ENCODE measurements at regions of chr2 and their contacts with region 1.

Region 1: DNA sequence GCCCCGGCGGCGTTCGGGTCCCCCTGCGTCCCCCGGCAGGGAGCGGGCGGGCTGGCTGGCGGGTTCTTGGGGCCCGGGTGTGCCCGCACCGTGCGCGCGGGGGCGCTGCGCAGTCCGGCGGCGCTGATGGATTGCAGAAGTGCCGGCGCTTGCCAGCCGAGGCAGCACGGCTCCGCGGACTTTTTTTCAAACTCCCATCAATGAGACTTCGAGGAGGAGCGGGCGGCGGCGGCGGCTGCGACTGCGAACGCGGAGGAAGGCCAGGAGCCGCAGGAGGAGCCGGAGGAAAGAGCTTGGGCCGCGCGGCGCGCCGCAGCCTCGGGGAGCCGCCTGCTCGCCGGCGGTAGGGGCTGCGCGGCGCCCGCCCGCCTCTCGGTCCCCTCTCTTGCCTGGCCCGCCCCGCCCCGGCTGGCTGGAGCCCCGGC is at the start of gene GLI2:
- DNase-seq: peak; percentile 50 to 90
- H3K4me3 ChIP-seq: peak within 1 kb of the TSS; percentile 80 to 91 (median 89)
- H3K27ac ChIP-seq: peak within 1 kb of the TSS; percentile 79; the same call in 1 of the 2 replicates
- H3K4me1 ChIP-seq: peaks cover 12 to 24% (median 16%) of the 10 kb centered on the region in 4 experiments
- H3K27me3 ChIP-seq: no peaks in the 10 kb centered on the region; a peak in 1 of 7 replicates
- CTCF ChIP-seq: peak; percentile 66 to 98 (median 83)
- EP300 ChIP-seq: no peak
- POLR2A ChIP-seq: no peak
- RAD21 ChIP-seq: peak; percentile 60 to 78
- total RNA-seq, gene GLI2: 46.9 and 49.8 TPM in 2 replicates

Region 2: GRCh38 chr2:120436885-120437603 is 298.7 kb before region 1 on chr2:
- CTCF ChIA-PET with region 1: no interaction called
- POLR2A ChIA-PET with region 1: no interaction called
- DNase-seq: peak; percentile 53 to 88
- H3K4me3 ChIP-seq: no peak overlapping the region
- H3K27ac ChIP-seq: no peak overlapping the region
- H3K4me1 ChIP-seq: peaks cover 0 to 30% (median 16%) of the 10 kb centered on the region in 4 experiments; a peak in 6 of 7 replicates
- H3K27me3 ChIP-seq: peaks cover 4 to 64% (median 51%) of the 10 kb centered on the region in 4 experiments
- CTCF ChIP-seq: peak in 2 of 3 experiments; percentile 94 to 95; a peak in 3 of 4 replicates
- EP300 ChIP-seq: no peak
- POLR2A ChIP-seq: no peak
- RAD21 ChIP-seq: peak; percentile 80 to 82

Region 3: DNA sequence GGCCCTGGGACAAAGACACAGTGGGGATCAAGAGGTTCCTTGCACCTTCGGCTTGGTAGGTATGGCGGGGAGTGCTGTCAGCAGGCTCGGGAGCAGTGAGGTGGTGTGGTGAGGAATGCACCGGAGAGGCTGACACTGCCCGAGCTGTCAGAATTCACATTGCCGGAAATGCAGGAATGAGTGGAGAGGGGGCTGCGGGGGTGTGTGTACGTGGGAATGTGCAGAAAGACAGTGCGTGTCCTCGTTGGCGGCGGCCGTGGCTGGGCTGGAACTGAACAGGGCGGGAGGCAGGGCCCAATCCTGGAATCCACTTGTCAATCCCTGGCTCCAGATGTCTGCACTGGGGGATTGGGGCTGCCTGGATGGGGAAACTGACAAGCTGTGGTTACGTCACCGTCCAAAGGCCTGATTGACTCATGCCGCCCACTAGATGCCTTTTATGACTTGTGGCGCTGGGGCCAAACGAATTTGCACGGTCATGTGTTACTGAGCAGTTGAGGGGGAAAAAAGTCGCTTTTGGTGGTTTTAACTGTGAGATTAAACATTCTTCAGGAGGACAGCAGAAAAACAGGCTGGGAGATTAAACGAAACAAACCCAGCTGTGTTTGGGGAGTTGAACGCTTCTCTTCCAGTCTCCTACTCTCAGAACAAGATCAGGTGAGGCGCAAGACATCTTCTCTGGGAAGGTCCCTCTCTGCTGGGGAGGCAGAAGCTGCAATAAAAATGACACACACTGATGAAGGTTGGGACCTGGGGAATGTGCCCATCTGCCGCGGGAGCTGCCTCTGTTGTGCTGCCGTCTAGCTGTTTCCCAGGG is 189.5 kb before region 1 on chr2:
- CTCF ChIA-PET with region 1: no interaction called
- POLR2A ChIA-PET with region 1: no interaction called
- DNase-seq: no peak
- H3K4me3 ChIP-seq: no peak overlapping the region
- H3K27ac ChIP-seq: no peak overlapping the region
- H3K4me1 ChIP-seq: peaks cover 0 to 3% (median 1%) of the 10 kb centered on the region in 4 experiments; a peak in 1 of 7 replicates
- H3K27me3 ChIP-seq: peaks cover 0 to 4% (median 0%) of the 10 kb centered on the region in 4 experiments; a peak in 3 of 7 replicates
- CTCF ChIP-seq: no peak
- EP300 ChIP-seq: no peak
- POLR2A ChIP-seq: no peak
- RAD21 ChIP-seq: no peak

Region 4: GRCh38 chr2:120605231-120605935 is 130.4 kb before region 1 on chr2:
- CTCF ChIA-PET with region 1: no interaction called
- POLR2A ChIA-PET with region 1: no interaction called
- DNase-seq: no peak
- H3K4me3 ChIP-seq: no peak overlapping the region
- H3K27ac ChIP-seq: no peak overlapping the region
- H3K4me1 ChIP-seq: peaks cover 0 to 4% (median 3%) of the 10 kb centered on the region in 4 experiments; a peak in 4 of 7 replicates
- H3K27me3 ChIP-seq: peaks cover 0 to 2% (median 0%) of the 10 kb centered on the region in 4 experiments; a peak in 2 of 7 replicates
- CTCF ChIP-seq: no peak
- EP300 ChIP-seq: no peak
- POLR2A ChIP-seq: no peak
- RAD21 ChIP-seq: no peak

Region 5: GRCh38 chr2:120669121-120669952 is 66.4 kb before region 1 on chr2:
- CTCF ChIA-PET with region 1: no interaction called
- POLR2A ChIA-PET with region 1: no interaction called
- DNase-seq: peak in 1 of 2 experiments; percentile 78
- H3K4me3 ChIP-seq: no peak overlapping the region
- H3K27ac ChIP-seq: no peak overlapping the region
- H3K4me1 ChIP-seq: peaks cover 0 to 6% (median 0%) of the 10 kb centered on the region in 4 experiments; a peak in 2 of 7 replicates
- H3K27me3 ChIP-seq: peaks cover 0 to 22% (median 19%) of the 10 kb centered on the region in 4 experiments; a peak in 6 of 7 replicates
- CTCF ChIP-seq: peak; percentile 70 to 89 (median 86); a peak in 3 of 4 replicates
- EP300 ChIP-seq: no peak
- POLR2A ChIP-seq: no peak
- RAD21 ChIP-seq: peak; percentile 55 to 70

Region 6: DNA sequence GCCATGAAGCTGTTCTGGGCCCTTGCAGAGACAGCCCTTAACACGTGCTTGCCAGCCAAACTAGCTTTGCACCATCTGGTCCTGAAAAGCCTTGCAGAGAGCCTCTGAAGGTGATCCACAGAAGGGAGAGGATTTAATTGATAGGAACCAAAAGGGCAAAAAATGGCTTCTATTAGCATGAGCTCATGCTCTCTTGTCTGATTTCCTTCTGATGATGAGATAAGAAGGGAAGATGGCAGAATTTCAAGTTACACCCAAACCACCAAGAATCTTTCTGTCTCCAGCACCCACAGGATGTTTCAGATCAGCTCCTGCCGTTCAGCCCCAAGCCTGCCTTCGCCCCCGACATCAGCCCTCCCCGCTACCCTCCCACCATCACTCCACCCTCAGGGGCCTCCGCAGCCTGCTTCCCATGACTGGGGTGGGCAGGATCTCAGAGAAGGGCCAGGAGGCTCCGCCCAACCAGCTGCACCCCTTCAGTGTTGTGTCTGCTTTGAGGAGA is 23.5 kb before region 1 on chr2:
- CTCF ChIA-PET with region 1: interaction called, 7 read pairs
- POLR2A ChIA-PET with region 1: interaction called, 25 read pairs
- DNase-seq: no peak
- H3K4me3 ChIP-seq: no peak overlapping the region
- H3K27ac ChIP-seq: no peak overlapping the region
- H3K4me1 ChIP-seq: peaks cover 14 to 23% (median 17%) of the 10 kb centered on the region in 4 experiments
- H3K27me3 ChIP-seq: peaks cover 0 to 19% (median 8%) of the 10 kb centered on the region in 4 experiments; a peak in 5 of 7 replicates
- CTCF ChIP-seq: no peak
- EP300 ChIP-seq: no peak
- POLR2A ChIP-seq: no peak
- RAD21 ChIP-seq: no peak

Region 7: GRCh38 chr2:120758181-120759144 is 22.7 kb after region 1 on chr2:
- CTCF ChIA-PET with region 1: interaction called, 10 read pairs
- POLR2A ChIA-PET with region 1: interaction called, 19 read pairs
- DNase-seq: no peak
- H3K4me3 ChIP-seq: no peak overlapping the region
- H3K27ac ChIP-seq: peak overlapping the region; percentile 14; the same call in 1 of the 2 replicates
- H3K4me1 ChIP-seq: peaks cover 21 to 47% (median 32%) of the 10 kb centered on the region in 4 experiments
- H3K27me3 ChIP-seq: no peaks in the 10 kb centered on the region
- CTCF ChIP-seq: no peak
- EP300 ChIP-seq: no peak
- POLR2A ChIP-seq: no peak
- RAD21 ChIP-seq: no peak

Region 8: GRCh38 chr2:120779781-120780283 is 44.1 kb after region 1 on chr2:
- CTCF ChIA-PET with region 1: interaction called, 11 read pairs
- POLR2A ChIA-PET with region 1: interaction called, 13 read pairs
- DNase-seq: no peak
- H3K4me3 ChIP-seq: no peak overlapping the region
- H3K27ac ChIP-seq: no peak overlapping the region
- H3K4me1 ChIP-seq: peaks cover 6 to 42% (median 27%) of the 10 kb centered on the region in 4 experiments
- H3K27me3 ChIP-seq: no peaks in the 10 kb centered on the region
- CTCF ChIP-seq: peak in 1 of 3 experiments; percentile 35; a peak in 1 of 4 replicates
- EP300 ChIP-seq: no peak
- POLR2A ChIP-seq: no peak
- RAD21 ChIP-seq: peak in 1 of 2 experiments; percentile 38; a peak in 1 of 4 replicates

Region 9: DNA sequence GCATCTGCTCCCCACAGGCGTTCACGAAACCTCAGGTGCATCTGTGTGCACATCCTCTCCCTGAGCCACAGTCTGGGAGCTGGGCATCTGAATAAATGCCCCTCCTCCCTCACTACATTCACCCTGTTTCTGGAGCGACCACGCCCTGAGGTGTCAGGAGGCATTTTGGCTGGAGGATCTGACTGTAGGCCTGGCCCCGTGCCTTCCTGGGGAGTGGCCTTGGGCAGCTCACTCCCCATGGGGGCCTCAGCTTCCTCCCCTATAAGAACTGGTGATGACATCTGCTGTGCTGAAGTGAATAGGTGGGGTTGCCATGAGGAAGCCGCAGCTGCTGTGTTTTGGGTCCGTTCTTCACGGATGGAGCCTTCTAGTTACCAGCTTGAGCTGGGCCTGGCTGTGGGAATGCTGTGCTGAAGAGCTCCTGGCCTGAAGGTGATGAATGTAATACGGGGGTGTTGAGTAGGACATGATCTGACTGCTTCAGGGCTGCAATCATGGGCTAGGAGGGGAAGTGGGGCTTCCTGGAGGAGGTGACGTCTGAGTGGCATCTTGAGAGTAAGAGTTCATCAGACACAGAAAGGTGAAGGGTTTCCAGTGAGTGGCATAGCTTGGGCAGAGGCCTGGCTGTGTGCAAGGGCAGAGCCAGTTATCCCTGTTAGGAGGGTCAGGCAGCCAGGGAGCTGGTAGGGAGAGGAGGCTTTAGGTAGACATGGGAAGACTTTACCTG is 58.1 kb after region 1 on chr2:
- CTCF ChIA-PET with region 1: interaction called, 11 read pairs
- POLR2A ChIA-PET with region 1: interaction called, 5 read pairs
- DNase-seq: no peak
- H3K4me3 ChIP-seq: no peak overlapping the region
- H3K27ac ChIP-seq: no peak overlapping the region
- H3K4me1 ChIP-seq: peaks cover 12 to 56% (median 36%) of the 10 kb centered on the region in 4 experiments
- H3K27me3 ChIP-seq: no peaks in the 10 kb centered on the region
- CTCF ChIP-seq: no peak
- EP300 ChIP-seq: no peak
- POLR2A ChIP-seq: no peak
- RAD21 ChIP-seq: no peak

Measured in H1 (cell line).